Endothelial cell of umbilical vein (primary cell): ENCODE measurements at regions of chr6 and their contacts with region 1.

Region 1: DNA sequence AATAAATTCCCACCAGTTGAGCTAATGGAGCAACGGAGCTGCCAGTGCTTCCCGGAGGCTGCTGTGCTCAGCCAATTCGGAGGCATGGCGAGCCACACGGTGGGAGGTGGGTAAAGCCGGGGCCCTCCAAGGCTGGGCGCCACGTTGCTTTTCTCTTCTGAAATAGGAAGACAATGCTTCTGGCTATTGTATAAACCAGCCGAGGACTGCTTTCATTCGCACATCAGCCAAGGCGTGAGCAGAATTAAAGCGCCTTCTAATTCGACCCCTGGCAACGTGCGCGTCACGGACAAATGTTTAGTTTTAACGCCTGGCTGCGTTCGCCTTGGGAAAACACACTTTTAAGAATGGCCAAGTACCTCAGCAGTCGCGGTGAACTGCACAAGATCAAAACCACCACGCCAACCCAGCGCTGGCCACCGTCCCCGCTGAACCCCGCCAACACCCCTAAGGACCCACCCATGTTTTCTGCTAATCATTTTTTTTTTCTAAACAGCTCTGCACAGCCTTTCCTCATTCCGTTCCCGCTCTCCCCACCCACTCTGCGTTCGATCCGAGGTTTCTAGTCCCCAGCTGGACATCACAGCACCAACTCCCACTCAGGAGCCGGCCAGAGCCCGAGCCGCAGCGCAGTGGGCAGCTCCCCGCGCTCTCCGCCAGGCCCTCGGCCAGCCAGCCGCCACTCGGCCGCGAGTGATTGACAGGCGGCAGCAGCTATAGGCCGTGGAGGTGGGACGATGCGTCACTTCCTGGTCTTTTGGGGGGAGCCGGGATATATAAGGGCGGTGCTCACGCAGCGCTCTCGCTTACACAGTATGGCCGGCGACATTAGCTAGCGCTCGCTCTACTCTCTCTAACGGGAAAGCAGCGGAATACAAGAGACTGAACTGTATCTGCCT is at the start of gene AMD1:
- DNase-seq: peak; percentile 97
- H3K4me3 ChIP-seq: peak within 1 kb of the TSS; percentile 85 to 92 (median 90)
- H3K27ac ChIP-seq: peak within 1 kb of the TSS; percentile 60
- H3K4me1 ChIP-seq: peaks cover 34% of the 10 kb centered on the region
- H3K27me3 ChIP-seq: peaks cover 0 to 2% of the 10 kb centered on the region in 2 experiments
- CTCF ChIP-seq: no peak
- POLR2A ChIP-seq: peak; percentile 100
- total RNA-seq, gene AMD1: 44.2 and 48.2 TPM in 2 replicates

Region 2: DNA sequence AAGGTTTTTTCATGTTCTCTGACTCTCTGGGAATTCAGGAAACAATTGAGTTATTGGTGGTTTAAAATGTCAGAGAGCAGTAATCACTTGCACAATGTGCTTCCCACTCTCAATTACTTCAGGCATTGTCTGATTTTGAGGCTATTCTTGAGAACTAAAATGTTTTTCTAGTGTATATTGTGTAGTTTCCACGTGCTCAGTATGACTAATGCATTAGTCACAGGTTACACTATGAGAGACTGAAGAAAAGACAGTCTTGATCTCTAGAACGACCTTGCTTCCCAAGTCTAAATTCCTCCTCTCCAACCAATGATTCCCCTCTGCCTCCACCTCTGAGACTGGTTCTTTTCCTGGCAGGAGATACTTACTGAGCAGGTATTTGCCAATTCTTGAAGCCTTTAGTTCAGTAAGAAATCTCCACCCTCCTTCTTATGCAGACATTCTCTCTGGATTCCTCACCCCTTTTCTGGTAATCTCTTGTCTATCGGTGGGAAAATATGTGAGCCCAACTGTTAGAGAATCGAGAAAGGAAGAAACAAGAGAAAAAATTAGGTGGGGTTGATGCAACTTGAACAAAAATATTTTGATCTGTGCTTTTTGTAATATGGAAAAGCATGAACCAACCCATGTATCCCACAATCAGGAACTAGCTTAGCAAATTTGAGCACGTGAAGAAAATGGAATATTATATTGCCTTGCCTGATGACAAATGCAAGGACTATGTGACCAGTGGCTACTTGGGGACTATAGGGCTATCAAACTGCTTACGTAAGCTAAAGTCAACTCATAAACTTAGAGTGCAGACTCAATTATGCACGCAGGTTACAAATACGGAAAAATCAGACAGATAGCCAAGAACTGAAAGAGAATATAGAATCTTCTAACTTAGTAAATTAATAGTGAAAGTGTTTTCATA is 336.8 kb before region 1 on chr6:
- CTCF ChIA-PET with region 1: no interaction called
- POLR2A ChIA-PET with region 1: interaction called, 8 read pairs
- dilution Hi-C with region 1: no loop called
- intact Hi-C with region 1: loop called (anchors 1 kb)
- DNase-seq: peak; percentile 97
- H3K4me3 ChIP-seq: no peak overlapping the region
- H3K27ac ChIP-seq: no peak overlapping the region
- H3K4me1 ChIP-seq: peaks cover 10% of the 10 kb centered on the region
- H3K27me3 ChIP-seq: peaks cover 67 to 81% of the 10 kb centered on the region in 2 experiments
- CTCF ChIP-seq: no peak
- POLR2A ChIP-seq: no peak

Region 3: DNA sequence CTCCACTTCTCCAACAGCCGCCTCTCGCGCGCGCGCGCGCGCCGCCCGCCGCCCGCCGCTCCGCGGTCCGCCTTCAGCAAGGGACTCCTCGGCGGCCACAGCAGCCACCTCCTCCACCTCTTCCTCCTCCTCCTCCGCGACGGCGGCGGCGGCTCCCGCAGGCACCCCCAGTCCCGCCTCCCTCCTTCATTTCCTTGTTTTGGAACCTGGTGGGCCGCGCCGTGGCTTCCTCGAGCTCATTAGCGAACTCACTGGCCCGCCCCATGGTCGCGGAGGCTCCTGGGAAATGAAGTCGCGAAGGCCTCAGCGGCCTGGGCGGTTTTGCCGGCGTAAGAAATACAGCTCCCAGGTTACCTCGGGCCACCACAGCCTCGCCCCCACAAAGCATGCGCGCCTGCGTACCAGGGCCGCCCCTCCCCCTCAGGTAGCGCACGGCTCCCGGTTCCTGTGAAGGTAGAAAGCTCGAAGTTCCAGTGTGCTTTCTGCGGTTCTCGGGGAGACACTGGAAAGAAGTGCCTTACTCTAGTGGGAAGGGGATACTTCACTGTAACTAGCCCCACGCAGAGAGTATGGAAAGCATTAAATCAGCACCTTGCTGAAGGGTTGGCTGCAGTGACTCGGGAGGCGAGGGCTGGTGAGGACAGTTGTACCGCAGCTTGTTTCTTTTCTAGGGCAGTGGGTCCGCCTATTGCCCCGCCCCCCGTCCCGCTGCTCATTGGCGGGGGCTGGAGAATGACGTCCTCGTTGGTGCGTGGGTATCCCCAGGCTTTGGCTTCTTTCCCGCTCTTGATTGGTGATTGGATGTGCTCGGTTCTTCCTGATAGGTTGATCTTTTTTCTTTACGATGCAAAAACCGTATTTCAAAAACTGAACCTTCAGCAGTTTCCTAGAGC is 58.8 kb before region 1 on chr6 and contains the start of gene CDK19:
- CTCF ChIA-PET with region 1: interaction called, 11 read pairs
- POLR2A ChIA-PET with region 1: interaction called, 133 read pairs
- dilution Hi-C with region 1: no loop called
- intact Hi-C with region 1: loop called (anchors 1 kb)
- DNase-seq: peak; percentile 99
- H3K4me3 ChIP-seq: peak within 1 kb of the TSS; percentile 66 to 97 (median 76)
- H3K27ac ChIP-seq: peak within 1 kb of the TSS; percentile 68
- H3K4me1 ChIP-seq: peaks cover 9% of the 10 kb centered on the region
- H3K27me3 ChIP-seq: peaks cover 0 to 2% of the 10 kb centered on the region in 2 experiments
- CTCF ChIP-seq: no peak
- POLR2A ChIP-seq: peak; percentile 76
- total RNA-seq, gene CDK19: 11.9 and 12.1 TPM in 2 replicates

Region 4: GRCh38 chr6:110890288-110890687 is 16.1 kb after region 1 on chr6:
- CTCF ChIA-PET with region 1: interaction called, 3 read pairs
- POLR2A ChIA-PET with region 1: interaction called, 25 read pairs
- dilution Hi-C with region 1: no loop called
- intact Hi-C with region 1: no loop called
- DNase-seq: no peak
- H3K4me3 ChIP-seq: no peak overlapping the region
- H3K27ac ChIP-seq: no peak overlapping the region
- H3K4me1 ChIP-seq: no peaks in the 10 kb centered on the region
- H3K27me3 ChIP-seq: no peaks in the 10 kb centered on the region
- CTCF ChIP-seq: no peak
- POLR2A ChIP-seq: no peak

Region 5: GRCh38 chr6:110981202-110981600 is 107.0 kb after region 1 on chr6:
- CTCF ChIA-PET with region 1: interaction called, 3 read pairs
- POLR2A ChIA-PET with region 1: interaction called, 14 read pairs
- dilution Hi-C with region 1: no loop called
- intact Hi-C with region 1: loop called (anchors 1 kb)
- DNase-seq: peak; percentile 33
- H3K4me3 ChIP-seq: peak overlapping the region; percentile 53 to 86 (median 75)
- H3K27ac ChIP-seq: peak overlapping the region; percentile 94
- H3K4me1 ChIP-seq: peaks cover 9% of the 10 kb centered on the region
- H3K27me3 ChIP-seq: no peaks in the 10 kb centered on the region
- CTCF ChIP-seq: no peak
- POLR2A ChIP-seq: no peak